Left ventricle myocardium inferior (tissue), 1 donor: ENCODE measurements at regions of chr14 and their contacts with region 1.

Region 1: DNA sequence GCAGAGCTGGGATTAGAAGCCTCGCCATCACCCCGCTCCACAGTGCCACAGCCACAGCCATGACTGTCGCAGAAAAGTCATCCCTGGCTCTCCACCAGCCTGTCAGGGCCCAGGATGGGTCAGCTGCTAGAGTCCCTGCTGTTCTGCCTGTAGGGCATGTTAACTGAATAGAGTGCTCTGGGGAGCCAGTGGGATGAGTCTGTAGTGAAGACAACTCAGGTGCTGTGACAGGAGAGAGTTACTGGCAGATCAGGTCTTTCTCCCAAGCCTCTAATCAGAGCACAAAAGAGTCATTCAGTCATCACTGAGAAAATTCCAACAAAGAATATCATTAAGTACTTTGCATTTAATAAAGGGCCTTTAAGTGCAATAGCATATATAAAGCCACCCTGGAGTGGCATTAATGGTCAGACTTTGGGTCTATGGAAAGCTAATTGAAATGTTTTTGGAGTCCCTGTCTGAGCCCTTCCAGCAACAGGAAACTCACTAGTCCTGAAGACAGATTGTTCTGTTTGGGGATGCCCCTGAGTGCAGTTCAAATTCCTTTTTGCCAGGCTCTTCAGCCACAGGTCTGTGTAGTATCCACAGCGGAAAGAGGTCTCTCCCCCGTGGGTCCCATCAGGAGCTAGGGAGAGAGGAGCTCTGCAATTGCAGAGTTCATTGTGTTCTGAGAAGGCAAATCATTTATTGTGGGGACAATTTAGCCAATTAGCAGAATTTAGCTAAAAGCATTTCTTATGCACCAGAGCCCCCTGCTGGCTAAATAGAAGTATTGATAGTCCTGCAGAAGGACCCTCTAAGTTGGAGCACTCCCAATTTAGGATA is 45.2 kb upstream of the C14orf132 start:
- DNase-seq: no peak
- H3K4me3 ChIP-seq: no peak overlapping the region
- H3K27ac ChIP-seq: no peak overlapping the region
- H3K4me1 ChIP-seq: no peaks in the 10 kb centered on the region
- H3K27me3 ChIP-seq: peaks cover 70% of the 10 kb centered on the region
- CTCF ChIP-seq: peak; percentile 83

Region 2: GRCh38 chr14:95561001-95561412 is 433.0 kb before region 1 on chr14:
- intact Hi-C with region 1: loop called (anchors 5 kb)
- DNase-seq: peak; percentile 78
- H3K4me3 ChIP-seq: no peak overlapping the region
- H3K27ac ChIP-seq: no peak overlapping the region
- H3K4me1 ChIP-seq: peaks cover 3% of the 10 kb centered on the region
- H3K27me3 ChIP-seq: peaks cover 13% of the 10 kb centered on the region
- CTCF ChIP-seq: peak; percentile 94

Region 3: DNA sequence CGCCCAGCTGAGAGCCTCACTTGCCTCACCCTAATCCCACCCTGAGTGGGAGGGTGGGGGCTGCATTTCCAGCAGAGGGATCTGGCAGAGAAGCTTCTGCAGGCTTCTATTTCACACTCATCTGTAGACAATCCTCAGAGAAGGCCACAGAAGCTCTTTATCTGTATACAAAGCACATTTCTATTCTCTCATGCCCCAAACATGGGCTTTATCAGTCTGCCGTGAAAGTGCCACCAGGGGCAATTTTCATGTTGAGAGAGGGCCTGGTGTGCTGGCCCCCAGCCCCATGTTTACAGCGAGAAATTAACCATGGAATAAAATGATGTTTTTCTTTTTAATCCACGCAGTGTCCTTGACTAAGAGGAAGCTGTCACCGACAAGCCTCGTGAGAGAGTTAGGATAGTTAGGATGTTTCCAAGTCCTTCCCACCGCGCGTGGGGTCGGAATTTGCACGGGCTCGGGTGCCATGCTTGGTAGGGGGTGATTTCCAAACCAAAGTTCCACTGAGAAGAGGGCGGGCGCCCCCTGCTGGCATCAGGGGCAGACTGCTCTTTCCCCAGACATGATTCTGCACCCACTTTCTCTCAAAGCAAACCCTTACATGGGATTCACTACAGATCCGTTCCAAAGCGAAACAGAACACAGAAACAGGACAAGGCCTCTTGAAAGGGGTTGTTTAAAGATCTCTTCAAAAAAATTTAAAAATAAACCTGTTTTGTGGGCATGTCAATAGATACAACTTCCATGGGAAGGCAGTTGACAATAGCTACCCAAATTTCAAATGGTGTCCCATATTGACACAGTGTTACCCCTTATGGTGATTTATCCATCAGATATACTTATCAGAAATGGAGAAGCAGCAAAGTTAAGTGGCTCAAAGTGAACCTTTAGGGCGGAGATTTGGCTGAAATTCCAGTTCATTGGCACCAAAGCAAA is 281.5 kb after region 1 on chr14:
- intact Hi-C with region 1: loop called (anchors 10 kb)
- DNase-seq: peak; percentile 52
- H3K4me3 ChIP-seq: no peak overlapping the region
- H3K27ac ChIP-seq: no peak overlapping the region
- H3K4me1 ChIP-seq: peaks cover 7% of the 10 kb centered on the region
- H3K27me3 ChIP-seq: no peaks in the 10 kb centered on the region
- CTCF ChIP-seq: peak; percentile 95

Region 4: DNA sequence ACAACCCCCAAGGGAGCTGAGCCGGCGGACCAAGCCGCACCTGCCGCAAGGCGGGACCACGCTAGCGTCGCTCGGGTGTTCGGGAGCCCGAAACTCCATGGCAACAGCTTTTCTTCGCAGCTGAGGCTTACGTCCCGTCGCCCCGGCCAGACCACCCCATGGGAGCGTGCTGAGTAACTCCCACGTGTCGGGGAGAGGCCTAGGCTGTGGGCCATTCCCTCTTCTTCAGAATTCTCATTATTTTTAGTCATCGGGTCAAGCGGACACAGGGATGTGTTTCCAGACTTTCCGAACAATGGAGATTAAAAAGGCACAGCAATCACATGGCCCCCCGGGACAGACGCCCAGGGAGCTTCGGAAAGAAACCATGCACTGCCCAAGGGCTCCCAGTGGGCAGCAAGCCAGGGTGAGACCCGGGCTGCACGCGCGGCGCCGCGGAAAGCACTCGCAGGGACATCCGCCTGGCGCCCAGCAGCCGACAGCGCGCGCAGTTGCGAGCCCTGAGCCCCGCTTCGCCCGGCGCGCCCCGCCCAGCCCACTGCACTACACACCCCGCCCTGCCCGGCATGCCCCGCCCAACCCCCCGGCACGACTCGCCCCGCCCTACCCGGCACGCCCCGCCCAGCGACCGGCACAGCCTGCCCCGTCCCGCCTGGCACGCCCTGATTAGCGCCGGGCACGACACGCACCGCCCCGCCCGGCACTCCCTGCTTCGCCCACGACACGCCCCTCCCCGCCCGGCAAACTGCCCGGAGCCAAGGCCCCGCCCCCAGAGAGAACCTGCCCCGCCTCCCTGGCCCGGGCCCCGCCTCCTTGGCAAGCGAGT is 397.5 kb after region 1 on chr14:
- intact Hi-C with region 1: no loop called
- DNase-seq: peak; percentile 97
- H3K4me3 ChIP-seq: peak overlapping the region; percentile 90
- H3K27ac ChIP-seq: peak overlapping the region; percentile 73
- H3K4me1 ChIP-seq: peaks cover 19% of the 10 kb centered on the region
- H3K27me3 ChIP-seq: no peaks in the 10 kb centered on the region
- CTCF ChIP-seq: peak; percentile 10